CD8-positive, alpha-beta memory T cell (primary cell): ENCODE measurements at regions of chrX and their contacts with region 1.

Region 1: GRCh38 chrX:155188786-155189185 is 27.5 kb upstream of the VBP1 start:
- DNase-seq: peak in 3 of 5 donors; percentile 45 to 61 (median 60)
- H3K4me3 ChIP-seq: peak overlapping the region; percentile 31
- H3K4me3 Mint-ChIP-seq: peak overlapping the region; percentile 7 to 75 (median 68)
- H3K27ac ChIP-seq: no peak overlapping the region
- H3K27ac Mint-ChIP-seq: peak overlapping the region in 7 of 8 donors; percentile 25 to 75 (median 70)
- H3K4me1 ChIP-seq: peaks cover 25% of the 10 kb centered on the region
- H3K4me1 Mint-ChIP-seq: peaks cover 25 to 53% (median 50%) of the 10 kb centered on the region in 3 donors
- H3K27me3 ChIP-seq: no peaks in the 10 kb centered on the region
- H3K27me3 Mint-ChIP-seq: peaks cover 0 to 5% of the 10 kb centered on the region in 2 donors

Region 2: GRCh38 chrX:155127940-155128339 is 60.8 kb before region 1 on chrX:
- CTCF ChIA-PET with region 1: no interaction called
- POLR2A ChIA-PET with region 1: no interaction called
- DNase-seq: no peak
- H3K4me3 ChIP-seq: no peak overlapping the region
- H3K4me3 Mint-ChIP-seq: no peak overlapping the region
- H3K27ac ChIP-seq: no peak overlapping the region
- H3K27ac Mint-ChIP-seq: no peak overlapping the region
- H3K4me1 ChIP-seq: no peaks in the 10 kb centered on the region
- H3K4me1 Mint-ChIP-seq: no peaks in the 10 kb centered on the region
- H3K27me3 ChIP-seq: no peaks in the 10 kb centered on the region
- H3K27me3 Mint-ChIP-seq: peaks cover 0 to 2% of the 10 kb centered on the region in 2 donors

Region 3: DNA sequence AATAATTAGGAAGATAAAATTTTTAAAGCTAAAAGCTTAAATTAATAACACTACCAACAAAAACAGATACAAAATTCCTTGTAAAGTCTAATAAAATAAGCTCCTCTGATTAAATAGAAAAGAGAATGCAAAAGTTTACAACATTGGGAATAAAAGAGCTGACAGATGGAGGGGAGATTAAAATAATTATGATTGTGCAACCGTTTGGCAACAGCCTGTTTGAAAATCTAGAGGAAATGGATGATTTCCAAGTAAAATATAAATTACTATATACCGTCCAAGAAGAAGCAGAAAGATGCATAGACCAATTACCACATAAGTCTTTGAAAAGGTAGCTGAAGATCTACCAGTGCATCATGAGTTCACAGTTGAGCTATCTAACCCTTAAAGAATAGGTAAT is 18.9 kb before region 1 on chrX:
- CTCF ChIA-PET with region 1: no interaction called
- POLR2A ChIA-PET with region 1: no interaction called
- DNase-seq: no peak
- H3K4me3 ChIP-seq: no peak overlapping the region
- H3K4me3 Mint-ChIP-seq: no peak overlapping the region
- H3K27ac ChIP-seq: no peak overlapping the region
- H3K27ac Mint-ChIP-seq: no peak overlapping the region
- H3K4me1 ChIP-seq: no peaks in the 10 kb centered on the region
- H3K4me1 Mint-ChIP-seq: no peaks in the 10 kb centered on the region
- H3K27me3 ChIP-seq: no peaks in the 10 kb centered on the region
- H3K27me3 Mint-ChIP-seq: peaks cover 1 to 3% of the 10 kb centered on the region in 2 donors

Region 4: GRCh38 chrX:155216179-155216939 is 27.6 kb after region 1 on chrX and contains the start of gene VBP1:
- CTCF ChIA-PET with region 1: interaction called, 8 read pairs
- POLR2A ChIA-PET with region 1: interaction called, 13 read pairs
- DNase-seq: peak; percentile 80 to 92 (median 83)
- H3K4me3 ChIP-seq: peak within 1 kb of the TSS; percentile 88
- H3K4me3 Mint-ChIP-seq: peak within 1 kb of the TSS; percentile 87 to 99 (median 90)
- H3K27ac ChIP-seq: peak within 1 kb of the TSS; percentile 69
- H3K27ac Mint-ChIP-seq: peak within 1 kb of the TSS; percentile 74 to 99 (median 89)
- H3K4me1 ChIP-seq: peaks cover 24% of the 10 kb centered on the region
- H3K4me1 Mint-ChIP-seq: peaks cover 24 to 33% (median 27%) of the 10 kb centered on the region in 3 donors
- H3K27me3 ChIP-seq: no peaks in the 10 kb centered on the region
- H3K27me3 Mint-ChIP-seq: peaks cover 0 to 2% of the 10 kb centered on the region in 2 donors
- total RNA-seq, gene VBP1: 80.1 to 86.3 TPM